Dendritic cell treated with granulocyte-macrophage colony-stimulating factor and Interleukin-4, amounts not matched to agents 40 ng/mL and 50 ng/mL, for 4 days (primary cell): ENCODE measurements at regions of chr1 and their contacts with region 1.

Region 1: DNA sequence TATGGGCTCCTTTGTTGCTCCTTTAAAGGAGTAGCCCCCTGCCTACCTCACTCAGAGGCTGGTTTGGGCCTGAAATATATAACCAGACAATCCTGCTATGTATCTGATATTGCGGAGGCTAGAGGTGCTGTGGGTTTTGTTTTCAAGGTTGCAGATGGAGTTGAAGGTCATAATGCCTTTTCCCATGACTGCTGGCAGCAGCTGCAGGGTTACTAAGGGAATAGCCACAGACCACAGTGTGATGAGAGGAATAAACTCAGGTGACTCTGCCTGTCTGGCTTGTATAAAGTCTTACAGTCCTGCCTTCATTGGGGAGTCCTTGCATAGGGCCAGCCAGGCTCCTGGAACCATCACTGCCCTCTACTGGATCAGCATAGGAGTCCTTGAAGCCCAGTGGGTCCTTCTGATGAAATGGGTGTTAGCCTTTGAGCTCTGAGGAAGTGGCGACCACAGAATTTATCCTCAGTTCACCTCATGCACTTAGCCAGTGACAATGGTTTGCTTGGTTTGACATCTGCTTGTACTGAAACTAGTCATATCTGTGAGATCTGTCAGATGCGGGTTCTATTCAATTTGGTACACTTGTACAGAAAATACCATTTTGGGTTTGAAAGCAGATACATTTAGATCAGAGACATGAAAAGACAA is 174.4 kb upstream of the HMCN1 start:
- H3K4me3 Mint-ChIP-seq: no peak overlapping the region
- H3K27ac Mint-ChIP-seq: peak overlapping the region; percentile 64
- H3K4me1 Mint-ChIP-seq: peaks cover 27% of the 10 kb centered on the region
- H3K27me3 Mint-ChIP-seq: no peaks in the 10 kb centered on the region

Region 2: GRCh38 chr1:185311589-185312225 is 248.1 kb before region 1 on chr1:
- intact Hi-C with region 1: loop called (anchors 2 kb)
- H3K4me3 Mint-ChIP-seq: peak overlapping the region; percentile 32
- H3K27ac Mint-ChIP-seq: peak overlapping the region; percentile 39
- H3K4me1 Mint-ChIP-seq: peaks cover 32% of the 10 kb centered on the region
- H3K27me3 Mint-ChIP-seq: no peaks in the 10 kb centered on the region

Region 3: DNA sequence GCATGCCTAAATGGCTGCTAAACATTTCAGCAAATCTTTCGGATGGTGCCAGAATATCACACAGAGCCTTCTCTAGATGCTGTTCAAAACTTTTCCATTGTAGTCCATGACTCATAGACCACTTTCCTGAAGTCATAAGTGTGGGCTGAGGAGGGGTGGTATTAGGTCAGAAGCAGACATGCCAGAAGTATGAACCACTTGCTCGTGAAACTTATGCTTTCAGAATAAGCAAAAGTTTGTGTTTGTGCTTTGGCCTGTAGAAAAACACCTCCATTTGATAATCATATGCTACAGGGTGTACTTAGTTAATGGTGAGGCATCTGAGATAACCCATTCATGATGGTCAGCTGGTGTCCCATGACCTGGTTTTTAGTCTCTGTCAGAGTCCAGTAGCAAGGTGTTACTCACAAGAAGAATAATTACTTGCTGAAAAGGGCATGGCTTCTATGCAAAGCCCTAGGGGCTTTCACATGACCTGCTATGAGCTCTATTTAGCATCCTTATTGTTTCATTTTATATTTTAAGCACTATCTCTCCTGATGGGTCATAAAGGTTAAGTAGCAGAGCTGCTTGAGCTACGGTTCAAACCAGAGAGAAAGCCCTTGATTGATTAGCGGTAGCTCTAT is 59.7 kb before region 1 on chr1:
- intact Hi-C with region 1: loop called (anchors 10 kb)
- H3K4me3 Mint-ChIP-seq: no peak overlapping the region
- H3K27ac Mint-ChIP-seq: no peak overlapping the region
- H3K4me1 Mint-ChIP-seq: peaks cover 16% of the 10 kb centered on the region
- H3K27me3 Mint-ChIP-seq: no peaks in the 10 kb centered on the region